GM12878 (cell line): ENCODE measurements at regions of chr21 and their contacts with region 1.

Region 1: DNA sequence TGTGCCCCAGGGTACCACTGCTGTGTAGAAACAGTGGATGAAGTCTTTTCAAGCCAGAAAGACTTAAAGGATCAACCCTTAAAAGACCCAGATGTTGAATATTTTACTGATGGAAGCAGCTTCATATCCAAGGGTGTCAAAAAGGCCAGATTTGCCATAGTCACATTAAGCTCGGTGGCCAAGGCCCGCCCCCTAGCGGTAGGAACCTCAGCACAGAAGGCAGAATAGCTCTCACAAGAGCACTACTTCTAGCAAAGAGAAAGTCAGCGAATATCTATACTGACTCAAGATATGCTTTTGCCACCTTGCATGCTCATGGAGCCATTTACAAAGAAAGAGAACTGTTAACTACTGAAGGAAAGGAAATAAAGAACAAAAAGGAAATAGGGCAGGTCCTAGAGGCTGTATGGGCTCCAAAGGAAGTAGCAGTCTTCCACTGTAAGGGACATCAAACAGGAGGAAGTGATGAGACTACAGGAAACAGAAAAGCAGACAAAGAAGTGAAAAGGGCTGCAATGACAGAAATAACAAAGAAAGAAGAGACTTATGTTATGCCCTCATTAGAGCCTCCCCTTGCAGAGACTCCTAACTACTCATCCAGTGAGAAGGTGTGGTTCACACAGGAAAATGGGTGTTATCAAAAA is 90.5 kb downstream of the LIPI start:
- DNase-seq: peak; percentile 23
- ATAC-seq: peak; percentile 75
- H3K4me3 ChIP-seq: no peak overlapping the region
- H3K27ac ChIP-seq: no peak overlapping the region
- H3K4me1 ChIP-seq: peaks cover 13% of the 10 kb centered on the region
- H3K27me3 ChIP-seq: no peaks in the 10 kb centered on the region
- CTCF ChIP-seq: peak; percentile 80 to 88 (median 87)
- EP300 ChIP-seq: no peak
- POLR2A ChIP-seq: no peak
- RAD21 ChIP-seq: peak; percentile 87

Region 2: GRCh38 chr21:14040386-14040785 is 79.8 kb before region 1 on chr21:
- CTCF ChIA-PET with region 1: interaction called, 4 read pairs
- POLR2A ChIA-PET with region 1: no interaction called
- RAD21 ChIA-PET with region 1: interaction called, 6 read pairs
- SMC1A ChIA-PET with region 1: no interaction called
- in situ Hi-C with region 1: no loop called
- intact Hi-C with region 1: loop called (anchors 5 kb)
- DNase-seq: no peak
- ATAC-seq: peak; percentile 51
- H3K4me3 ChIP-seq: no peak overlapping the region
- H3K27ac ChIP-seq: no peak overlapping the region
- H3K4me1 ChIP-seq: no peaks in the 10 kb centered on the region
- H3K27me3 ChIP-seq: no peaks in the 10 kb centered on the region
- CTCF ChIP-seq: no peak
- EP300 ChIP-seq: no peak
- POLR2A ChIP-seq: no peak
- RAD21 ChIP-seq: no peak

Region 3: DNA sequence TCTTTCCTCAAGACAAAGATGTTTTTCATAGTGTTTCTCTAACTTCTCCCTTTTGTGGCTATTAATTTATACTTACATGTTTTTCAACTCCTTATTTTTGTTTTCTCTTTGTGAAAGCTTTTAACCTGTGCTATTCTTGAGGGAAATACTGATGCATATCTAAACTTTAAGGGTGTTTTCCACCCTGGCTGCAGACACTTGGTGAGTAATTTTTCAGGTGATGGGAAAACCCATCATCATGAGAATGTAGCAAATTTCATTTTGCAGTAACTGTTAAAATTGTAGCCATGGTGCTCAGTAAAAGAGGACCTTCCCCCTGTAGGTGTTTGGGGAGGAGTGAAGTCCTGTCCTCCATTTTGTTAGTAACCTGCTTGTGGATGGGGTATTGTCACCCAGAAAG is 33.7 kb before region 1 on chr21:
- CTCF ChIA-PET with region 1: interaction called, 3 read pairs
- POLR2A ChIA-PET with region 1: interaction called, 5 read pairs
- RAD21 ChIA-PET with region 1: interaction called, 3 read pairs
- SMC1A ChIA-PET with region 1: interaction called, 7 read pairs
- in situ Hi-C with region 1: no loop called
- intact Hi-C with region 1: loop called (anchors 2 kb)
- DNase-seq: peak; percentile 70
- ATAC-seq: peak; percentile 83
- H3K4me3 ChIP-seq: no peak overlapping the region
- H3K27ac ChIP-seq: peak overlapping the region; percentile 71
- H3K4me1 ChIP-seq: peaks cover 6% of the 10 kb centered on the region
- H3K27me3 ChIP-seq: no peaks in the 10 kb centered on the region
- CTCF ChIP-seq: no peak
- EP300 ChIP-seq: peak in 1 of 2 experiments; percentile 57; a peak in 1 of 4 replicates
- POLR2A ChIP-seq: no peak
- RAD21 ChIP-seq: no peak

Region 4: DNA sequence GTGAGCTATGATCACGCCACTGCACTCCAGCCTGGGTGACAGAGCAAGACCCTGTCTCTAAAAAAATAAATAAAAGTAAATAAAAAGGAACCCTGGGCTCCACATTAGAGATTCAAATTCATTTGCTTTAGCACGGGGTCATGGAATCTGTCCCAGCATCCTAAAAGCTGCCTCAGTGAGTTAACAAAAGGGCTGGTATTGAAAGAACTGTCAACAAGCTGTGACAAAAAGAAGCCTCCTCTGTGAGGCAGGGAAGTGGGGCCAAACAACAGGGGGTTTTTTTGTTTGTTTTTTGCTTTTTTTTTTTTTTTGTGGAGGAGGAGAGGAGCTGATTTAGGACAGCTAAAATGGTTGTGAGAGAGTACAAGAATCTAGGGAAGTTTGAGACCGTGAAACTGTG is 25.2 kb before region 1 on chr21:
- CTCF ChIA-PET with region 1: interaction called, 14 read pairs
- POLR2A ChIA-PET with region 1: interaction called, 7 read pairs
- RAD21 ChIA-PET with region 1: interaction called, 9 read pairs
- SMC1A ChIA-PET with region 1: interaction called, 6 read pairs
- in situ Hi-C with region 1: no loop called
- intact Hi-C with region 1: no loop called
- DNase-seq: no peak
- ATAC-seq: no peak; the same call in 2 of the 3 replicates
- H3K4me3 ChIP-seq: no peak overlapping the region
- H3K27ac ChIP-seq: peak overlapping the region; percentile 48
- H3K4me1 ChIP-seq: peaks cover 9% of the 10 kb centered on the region
- H3K27me3 ChIP-seq: no peaks in the 10 kb centered on the region
- CTCF ChIP-seq: no peak
- EP300 ChIP-seq: no peak
- POLR2A ChIP-seq: no peak
- RAD21 ChIP-seq: no peak